ENCODE measurements at regions of chr14 and their contacts with region 1.

Region 1: DNA sequence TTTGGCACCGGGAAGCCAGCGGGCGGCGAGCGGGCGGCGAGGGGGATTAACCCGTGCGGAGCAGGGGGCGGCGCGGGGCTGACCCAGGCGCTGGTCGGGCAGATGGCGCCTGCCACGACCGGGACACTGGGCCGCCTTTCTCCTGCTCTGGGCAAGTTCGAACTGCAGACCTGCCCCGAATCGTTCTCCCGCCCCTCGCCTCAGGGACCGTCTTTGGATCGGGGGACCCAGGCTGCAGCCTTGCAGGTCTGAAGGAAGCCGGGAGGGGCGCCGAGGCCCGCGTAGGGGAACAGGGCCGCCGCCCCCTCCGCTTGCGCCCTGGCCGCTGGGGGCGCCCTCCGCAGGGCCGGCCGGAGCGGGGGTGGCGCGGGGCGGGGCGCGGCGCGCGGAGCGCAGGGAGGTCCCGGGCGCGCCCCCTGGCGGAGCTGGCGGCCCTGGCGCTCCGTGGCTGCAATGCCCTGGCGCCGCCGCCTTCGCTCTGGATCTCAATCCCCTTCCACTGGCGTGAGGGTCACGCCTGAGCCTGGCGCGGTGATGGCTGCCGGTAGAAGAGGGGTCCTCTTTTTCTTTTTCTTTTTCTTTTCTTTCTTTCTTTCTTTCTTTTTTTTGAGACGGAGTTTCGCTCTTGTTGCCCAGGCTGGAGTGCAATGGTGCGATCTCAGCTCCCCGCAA is 449 bp upstream of the LTBP2 start:
- DNase-seq: peak; percentile 83
- ATAC-seq: peak; percentile 88
- H3K4me3 Mint-ChIP-seq: peak overlapping the region; percentile 51
- H3K27ac Mint-ChIP-seq: no peak overlapping the region
- H3K4me1 Mint-ChIP-seq: peaks cover 20% of the 10 kb centered on the region
- H3K27me3 Mint-ChIP-seq: peaks cover 57% of the 10 kb centered on the region

Region 2: DNA sequence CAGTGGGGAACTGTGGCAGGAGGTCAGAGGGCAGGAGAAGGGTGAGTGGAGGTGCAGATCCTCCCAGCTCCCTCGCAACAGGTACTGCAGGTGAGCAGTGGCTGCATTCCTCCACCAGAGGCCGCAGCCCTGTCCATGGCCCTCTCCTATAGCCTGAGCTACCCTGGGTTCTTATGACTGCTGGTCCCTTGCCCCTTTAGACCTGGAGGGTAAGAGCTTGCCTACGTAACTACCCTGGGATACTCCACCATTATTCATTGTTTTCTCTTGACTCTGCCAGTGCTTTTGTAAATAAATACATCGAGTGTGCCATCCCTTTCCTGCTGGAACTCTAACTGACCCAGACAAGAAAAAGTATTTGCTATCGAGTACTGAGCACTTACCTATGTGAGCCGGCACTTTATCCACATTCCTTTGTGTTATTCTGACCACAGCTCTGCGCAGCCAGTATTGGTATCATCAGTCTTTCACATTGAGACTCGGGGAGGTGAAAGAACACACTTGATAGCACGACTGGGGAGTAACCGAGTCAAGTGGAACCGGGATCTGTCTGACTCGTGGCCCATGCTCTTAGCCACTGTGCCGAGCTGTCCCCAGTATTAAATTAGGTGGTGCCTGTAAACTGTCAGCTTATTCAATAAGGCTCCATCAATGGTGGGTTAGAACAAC is 38.9 kb before region 1 on chr14:
- CTCF ChIA-PET with region 1: interaction called, 14 read pairs
- DNase-seq: no peak
- ATAC-seq: peak; percentile 60
- H3K4me3 Mint-ChIP-seq: peak overlapping the region; percentile 4
- H3K27ac Mint-ChIP-seq: peak overlapping the region; percentile 12
- H3K4me1 Mint-ChIP-seq: peaks cover 42% of the 10 kb centered on the region
- H3K27me3 Mint-ChIP-seq: peaks cover 79% of the 10 kb centered on the region

Region 3: DNA sequence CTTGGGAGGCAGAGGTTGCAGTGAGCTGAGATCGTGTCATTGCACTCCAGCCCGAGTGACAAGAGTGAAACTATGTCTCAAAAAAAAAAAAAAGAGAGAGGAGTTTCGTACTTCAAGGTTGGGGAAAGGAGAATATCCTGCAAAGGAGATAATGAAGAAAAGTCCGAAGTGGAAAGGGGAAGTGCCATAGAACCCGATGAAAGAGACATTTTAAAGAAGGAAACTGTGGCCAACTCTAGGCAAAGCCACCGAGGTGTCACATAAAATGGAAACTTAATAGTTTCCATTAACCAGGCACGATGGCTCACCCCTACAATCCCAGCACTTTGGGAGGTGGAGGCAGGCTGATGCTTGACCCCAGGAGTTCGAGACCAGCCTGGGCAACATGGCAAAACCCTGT is 14.6 kb after region 1 on chr14:
- CTCF ChIA-PET with region 1: interaction called, 36 read pairs
- DNase-seq: no peak
- ATAC-seq: no peak
- H3K4me3 Mint-ChIP-seq: no peak overlapping the region
- H3K27ac Mint-ChIP-seq: no peak overlapping the region
- H3K4me1 Mint-ChIP-seq: peaks cover 4% of the 10 kb centered on the region
- H3K27me3 Mint-ChIP-seq: peaks cover 51% of the 10 kb centered on the region

Region 4: DNA sequence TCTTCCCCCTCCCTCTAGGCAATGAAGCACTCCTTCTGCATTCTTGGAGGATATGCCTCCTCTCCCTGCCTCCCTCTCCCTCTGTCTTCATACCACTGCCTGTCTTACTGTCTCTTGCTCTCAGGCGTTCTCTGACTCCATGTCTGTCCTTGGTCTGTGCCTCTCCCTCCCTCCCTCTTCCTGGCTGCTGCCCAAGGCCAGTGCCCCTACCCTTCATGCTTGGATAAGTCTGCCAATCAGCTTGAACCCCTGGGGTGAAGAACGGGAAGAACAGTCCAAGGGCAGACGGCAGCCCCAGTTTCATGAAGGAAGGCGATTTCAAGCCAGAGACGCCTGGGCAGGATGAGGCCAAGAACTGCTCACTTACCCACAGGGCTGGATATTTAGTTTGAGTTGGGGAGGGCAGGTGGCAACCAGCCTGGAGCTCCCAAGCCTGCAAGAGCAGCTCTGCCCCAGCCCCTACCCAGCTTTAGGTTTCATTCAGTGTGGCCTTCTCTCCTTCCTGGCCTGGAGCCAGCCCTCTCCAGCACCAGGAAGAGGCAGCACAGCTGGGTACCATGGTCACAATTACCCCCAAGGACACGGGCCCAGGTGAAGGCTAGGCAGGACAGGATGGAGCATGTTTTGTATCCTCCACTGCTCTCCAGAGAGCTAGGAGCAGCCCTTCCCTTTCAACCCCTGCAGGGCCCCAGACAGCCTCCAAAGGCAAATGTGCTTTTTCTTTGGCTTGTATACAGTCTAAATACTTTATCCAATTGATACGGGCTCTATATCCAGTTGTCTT is 35.4 kb after region 1 on chr14:
- CTCF ChIA-PET with region 1: interaction called, 68 read pairs
- DNase-seq: no peak
- ATAC-seq: no peak
- H3K4me3 Mint-ChIP-seq: no peak overlapping the region
- H3K27ac Mint-ChIP-seq: no peak overlapping the region
- H3K4me1 Mint-ChIP-seq: peaks cover 8% of the 10 kb centered on the region
- H3K27me3 Mint-ChIP-seq: peaks cover 13% of the 10 kb centered on the region

Region 5: DNA sequence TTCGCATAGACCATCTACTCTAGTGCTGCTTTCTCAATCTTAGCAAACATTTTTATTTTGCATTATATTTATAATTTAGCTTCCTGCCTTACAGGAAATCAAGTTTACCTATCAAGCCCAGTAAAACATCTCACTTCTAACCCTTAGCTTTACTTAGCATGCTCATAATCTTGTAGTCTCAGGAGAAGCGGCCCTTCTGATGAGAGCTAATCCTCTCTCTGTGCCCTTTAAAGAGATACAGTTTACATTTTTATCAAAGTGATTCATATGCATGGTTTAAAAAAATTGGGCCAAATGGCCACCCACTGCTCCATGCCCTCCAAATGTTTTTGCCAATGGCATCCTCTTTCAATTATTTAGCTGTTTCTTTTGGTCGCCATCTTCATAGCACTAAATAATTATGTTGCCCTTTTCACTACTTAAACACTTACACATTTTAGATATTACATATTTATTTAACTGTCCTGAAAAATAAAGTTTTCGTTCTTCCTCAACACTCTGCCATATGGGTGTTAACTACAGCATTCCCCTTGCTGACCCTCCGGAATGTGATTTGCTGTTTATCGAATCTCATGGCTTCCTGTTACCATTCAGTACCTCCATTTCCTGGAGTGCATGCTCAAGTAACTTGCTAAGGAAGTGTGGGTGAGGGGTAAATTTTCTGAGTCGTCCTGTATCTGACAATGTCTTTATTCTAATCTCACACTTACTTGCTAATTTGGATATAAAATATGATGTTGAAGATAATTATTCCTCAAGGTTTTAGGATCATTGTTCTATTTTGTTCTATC is 180.0 kb after region 1 on chr14:
- CTCF ChIA-PET with region 1: interaction called, 12 read pairs
- DNase-seq: no peak
- ATAC-seq: peak; percentile 82
- H3K4me3 Mint-ChIP-seq: peak overlapping the region; percentile 37
- H3K27ac Mint-ChIP-seq: peak overlapping the region; percentile 81
- H3K4me1 Mint-ChIP-seq: peaks cover 37% of the 10 kb centered on the region
- H3K27me3 Mint-ChIP-seq: no peaks in the 10 kb centered on the region

Region 6: DNA sequence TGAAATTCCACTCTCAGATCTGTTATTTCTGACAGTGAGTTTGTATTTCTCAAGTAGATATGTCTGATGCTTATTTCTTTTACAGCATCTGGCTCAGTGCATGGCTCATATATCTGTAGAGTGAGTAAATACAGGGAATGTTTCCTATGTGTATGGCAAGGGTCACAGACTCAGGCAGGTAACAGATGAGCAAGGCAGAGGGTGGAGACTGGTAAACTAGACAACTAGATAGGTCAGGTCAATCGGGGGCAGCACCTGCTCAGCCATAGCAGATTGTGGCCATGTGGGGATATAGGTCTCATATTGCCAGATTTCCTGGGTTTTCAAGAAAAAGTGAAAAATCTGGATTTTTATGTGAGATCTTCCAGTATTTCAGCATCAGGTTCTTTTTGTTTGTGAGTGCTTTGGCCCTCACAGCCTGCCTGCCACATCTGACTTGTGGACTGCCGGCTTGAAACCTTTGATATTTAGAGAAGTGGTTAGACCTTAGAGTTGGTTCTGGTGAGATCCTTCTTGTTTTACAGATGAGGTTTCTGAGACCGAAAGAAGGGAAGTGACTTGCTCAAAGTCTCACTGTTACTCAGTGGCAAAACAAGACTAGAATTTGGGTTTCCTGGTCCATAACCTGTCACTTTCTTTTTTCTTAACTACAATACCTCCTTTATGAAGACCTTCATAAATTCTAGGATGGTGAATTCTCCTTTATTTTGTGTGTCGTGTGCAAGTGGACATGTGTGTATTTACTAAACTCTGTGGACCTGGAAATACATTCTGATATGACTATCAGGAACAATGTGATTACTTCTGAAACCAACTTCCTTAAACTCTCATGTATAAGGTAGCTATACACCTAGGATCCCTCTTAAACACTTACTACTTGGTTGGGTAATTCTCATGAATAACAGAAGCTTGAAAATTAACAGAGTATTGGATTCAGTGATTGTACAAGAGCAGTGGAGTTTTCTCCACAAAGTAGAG is 229.0 kb after region 1 on chr14:
- CTCF ChIA-PET with region 1: interaction called, 11 read pairs
- DNase-seq: peak; percentile 67
- ATAC-seq: peak; percentile 79
- H3K4me3 Mint-ChIP-seq: peak overlapping the region; percentile 27
- H3K27ac Mint-ChIP-seq: peak overlapping the region; percentile 84
- H3K4me1 Mint-ChIP-seq: peaks cover 56% of the 10 kb centered on the region
- H3K27me3 Mint-ChIP-seq: no peaks in the 10 kb centered on the region

Region 7: GRCh38 chr14:74867673-74868072 is 255.2 kb after region 1 on chr14:
- CTCF ChIA-PET with region 1: interaction called, 10 read pairs
- DNase-seq: peak; percentile 89
- ATAC-seq: peak; percentile 99
- H3K4me3 Mint-ChIP-seq: peak overlapping the region; percentile 22
- H3K27ac Mint-ChIP-seq: peak overlapping the region; percentile 74
- H3K4me1 Mint-ChIP-seq: peaks cover 25% of the 10 kb centered on the region
- H3K27me3 Mint-ChIP-seq: no peaks in the 10 kb centered on the region

Measured in activated CD8-positive, alpha-beta memory T cell treated with anti-CD3 and anti-CD28 coated beads, Interleukin-2, amount 10 ng/mL, durations not matched to agents 7 days and 5 days (primary cell).